CD4-positive, alpha-beta memory T cell (primary cell): ENCODE measurements at regions of chr1 and their contacts with region 1.

Region 1: DNA sequence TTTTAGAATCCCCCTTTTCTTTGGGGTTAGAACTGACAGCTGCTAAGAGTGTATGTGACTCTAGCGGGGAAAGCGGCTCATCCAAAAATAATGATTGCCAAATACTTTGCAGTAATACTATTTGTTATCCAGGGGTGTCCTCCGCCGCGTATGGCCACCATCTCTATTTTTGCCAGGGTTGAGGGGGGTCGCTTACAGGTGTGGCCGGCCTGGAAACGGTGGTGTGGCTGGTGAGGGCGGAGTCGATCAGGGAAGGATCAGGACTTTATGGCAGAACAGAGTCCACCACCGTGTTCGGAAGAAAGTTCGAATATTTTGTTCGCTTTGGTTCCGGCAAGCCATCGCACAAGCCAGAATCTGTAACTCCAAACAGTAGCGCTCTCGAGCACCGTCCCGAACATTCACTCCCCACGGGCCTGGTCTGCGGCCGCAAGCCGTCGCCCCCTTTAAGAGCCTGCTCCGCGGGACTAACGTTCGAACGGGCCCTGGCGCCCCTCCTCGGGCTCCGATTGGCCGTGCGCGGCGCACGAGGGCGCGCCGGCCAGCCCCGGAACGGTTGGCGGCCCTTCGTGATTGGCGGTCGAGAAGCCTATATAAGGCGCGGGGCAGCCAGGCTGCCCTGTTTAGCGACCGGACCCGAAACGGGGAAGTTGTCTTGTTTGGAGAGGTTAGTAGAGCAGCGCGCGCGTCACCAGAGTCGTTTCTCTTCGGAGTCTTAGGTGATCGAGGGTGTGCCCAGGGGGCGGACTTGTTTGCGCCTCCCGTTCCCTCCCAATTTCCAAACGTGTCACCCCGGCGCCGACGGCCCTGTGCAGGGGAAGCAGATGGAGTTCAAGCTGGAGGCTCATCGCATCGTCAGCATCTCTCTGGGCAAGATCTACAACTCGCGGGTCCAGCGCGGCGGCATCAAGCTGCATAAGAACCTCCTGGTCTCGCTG is at the start of gene IER5:
- DNase-seq: peak; percentile 93 to 95 (median 95)
- H3K4me3 ChIP-seq: peak within 1 kb of the TSS; percentile 68 to 69
- H3K4me3 Mint-ChIP-seq: peak within 1 kb of the TSS; percentile 98 to 100 (median 99)
- H3K27ac ChIP-seq: peak within 1 kb of the TSS; percentile 100
- H3K27ac Mint-ChIP-seq: peak within 1 kb of the TSS; percentile 96 to 99 (median 99)
- H3K4me1 ChIP-seq: peaks cover 40% of the 10 kb centered on the region
- H3K4me1 Mint-ChIP-seq: peaks cover 29 to 63% (median 40%) of the 10 kb centered on the region in 4 donors
- H3K27me3 ChIP-seq: no peaks in the 10 kb centered on the region
- H3K27me3 Mint-ChIP-seq: no peaks in the 10 kb centered on the region
- total RNA-seq, gene IER5: 28.0 to 29.3 TPM

Region 2: GRCh38 chr1:180502360-180503273 is 585.7 kb before region 1 on chr1 and contains the start of gene ACBD6:
- CTCF ChIA-PET with region 1: no interaction called
- POLR2A ChIA-PET with region 1: interaction called, 12 read pairs
- intact Hi-C with region 1: loop called (anchors 5 kb)
- DNase-seq: peak; percentile 86 to 91 (median 88)
- H3K4me3 ChIP-seq: peak within 1 kb of the TSS; percentile 89 to 95
- H3K4me3 Mint-ChIP-seq: peak within 1 kb of the TSS; percentile 96 to 99 (median 98)
- H3K27ac ChIP-seq: peak within 1 kb of the TSS; percentile 71
- H3K27ac Mint-ChIP-seq: peak within 1 kb of the TSS; percentile 92 to 99 (median 97)
- H3K4me1 ChIP-seq: peaks cover 42% of the 10 kb centered on the region
- H3K4me1 Mint-ChIP-seq: peaks cover 23 to 42% (median 31%) of the 10 kb centered on the region in 4 donors
- H3K27me3 ChIP-seq: no peaks in the 10 kb centered on the region
- H3K27me3 Mint-ChIP-seq: no peaks in the 10 kb centered on the region
- total RNA-seq, gene ACBD6: 55.1 to 64.2 TPM

Region 3: DNA sequence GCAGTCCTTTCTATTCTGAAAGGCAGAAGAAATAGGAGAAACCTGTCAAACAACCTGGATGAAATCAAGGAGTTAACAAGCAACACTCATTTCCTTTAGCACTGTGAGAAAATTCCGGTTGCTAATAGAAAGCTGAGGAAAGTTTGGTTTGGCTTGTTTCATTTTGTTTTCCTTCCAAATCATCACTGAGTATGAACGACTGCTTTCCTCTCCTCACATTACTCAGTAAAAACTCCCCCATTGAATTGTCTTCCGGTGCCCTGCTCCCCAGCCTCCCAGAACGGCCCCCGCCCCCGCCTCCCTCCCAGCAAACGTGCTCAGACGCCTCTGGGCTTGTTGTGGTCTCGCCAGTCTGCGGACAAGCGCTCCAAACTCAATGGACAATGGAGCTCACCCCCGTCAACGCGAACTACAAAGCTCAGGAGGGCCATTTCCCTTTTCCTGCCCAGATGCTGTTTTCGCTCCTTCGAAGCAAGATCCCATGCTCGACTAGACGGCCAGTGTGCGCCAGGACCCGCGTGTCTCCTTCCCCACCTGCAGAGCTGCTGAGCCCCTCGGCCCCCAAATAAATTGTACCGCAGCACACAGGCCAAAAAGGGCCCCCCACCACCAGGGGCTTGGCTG is 66.4 kb before region 1 on chr1:
- CTCF ChIA-PET with region 1: interaction called, 3 read pairs
- POLR2A ChIA-PET with region 1: interaction called, 35 read pairs
- intact Hi-C with region 1: loop called (anchors 2 kb)
- DNase-seq: peak; percentile 26 to 79 (median 43)
- H3K4me3 ChIP-seq: peak overlapping the region; percentile 73 to 90
- H3K4me3 Mint-ChIP-seq: peak overlapping the region; percentile 95 to 98 (median 96)
- H3K27ac ChIP-seq: peak overlapping the region; percentile 75
- H3K27ac Mint-ChIP-seq: peak overlapping the region; percentile 93 to 100 (median 99)
- H3K4me1 ChIP-seq: peaks cover 51% of the 10 kb centered on the region
- H3K4me1 Mint-ChIP-seq: peaks cover 32 to 66% (median 41%) of the 10 kb centered on the region in 4 donors
- H3K27me3 ChIP-seq: no peaks in the 10 kb centered on the region
- H3K27me3 Mint-ChIP-seq: peaks cover 0 to 8% of the 10 kb centered on the region in 2 donors

Region 4: DNA sequence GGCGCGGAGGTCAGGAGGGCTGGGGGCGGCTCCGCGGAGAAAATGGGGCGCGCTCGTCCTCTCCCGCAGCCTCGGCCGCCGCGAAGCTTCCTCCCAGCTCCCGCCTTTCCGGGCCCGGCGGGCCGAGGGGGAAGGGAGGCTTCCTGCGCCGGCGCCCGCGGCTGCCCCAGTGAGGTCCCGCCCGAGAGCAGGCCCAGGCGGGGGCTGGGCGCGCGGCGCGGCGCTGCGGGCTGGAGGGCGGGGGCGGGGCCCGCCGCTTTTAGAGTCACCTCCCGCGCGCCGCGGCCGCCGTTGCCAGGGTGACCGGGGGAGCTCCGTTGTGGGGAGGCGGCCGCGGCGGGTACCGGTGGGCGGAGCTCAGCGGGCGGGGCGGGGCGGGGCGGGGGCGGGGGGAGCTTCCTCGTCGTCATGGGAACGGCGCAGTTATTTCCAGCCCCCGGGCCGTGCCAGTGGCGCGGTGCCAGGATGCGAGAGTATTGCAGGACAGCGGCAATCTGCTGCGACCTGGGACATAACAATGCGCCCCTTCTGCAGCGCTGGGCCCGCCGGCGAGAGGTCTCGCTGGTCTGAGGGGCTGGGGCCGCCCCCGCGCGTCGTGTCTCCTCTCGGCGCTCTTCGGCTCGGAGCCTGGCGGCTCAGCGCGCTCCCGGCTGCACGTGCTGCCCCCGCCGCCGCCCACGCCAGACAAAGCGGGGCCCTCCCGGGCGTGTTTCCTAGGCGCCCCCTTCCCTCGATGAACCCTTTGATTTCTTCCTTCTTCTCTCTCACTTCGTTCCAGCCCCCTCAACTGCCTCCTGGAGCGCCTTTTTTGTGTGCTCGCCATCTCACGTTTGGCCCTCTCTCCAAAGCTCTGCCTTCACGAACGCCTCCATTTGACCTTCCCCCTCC is 17.0 kb after region 1 on chr1:
- CTCF ChIA-PET with region 1: interaction called, 75 read pairs
- POLR2A ChIA-PET with region 1: interaction called, 508 read pairs
- intact Hi-C with region 1: loop called (anchors 1 kb)
- DNase-seq: peak; percentile 90 to 94 (median 91)
- H3K4me3 ChIP-seq: peak overlapping the region in 1 of 2 donors; percentile 76
- H3K4me3 Mint-ChIP-seq: peak overlapping the region; percentile 87 to 97 (median 90)
- H3K27ac ChIP-seq: peak overlapping the region; percentile 79
- H3K27ac Mint-ChIP-seq: peak overlapping the region; percentile 92 to 98 (median 96)
- H3K4me1 ChIP-seq: peaks cover 56% of the 10 kb centered on the region
- H3K4me1 Mint-ChIP-seq: peaks cover 33 to 71% (median 50%) of the 10 kb centered on the region in 4 donors
- H3K27me3 ChIP-seq: no peaks in the 10 kb centered on the region
- H3K27me3 Mint-ChIP-seq: no peaks in the 10 kb centered on the region

Region 5: DNA sequence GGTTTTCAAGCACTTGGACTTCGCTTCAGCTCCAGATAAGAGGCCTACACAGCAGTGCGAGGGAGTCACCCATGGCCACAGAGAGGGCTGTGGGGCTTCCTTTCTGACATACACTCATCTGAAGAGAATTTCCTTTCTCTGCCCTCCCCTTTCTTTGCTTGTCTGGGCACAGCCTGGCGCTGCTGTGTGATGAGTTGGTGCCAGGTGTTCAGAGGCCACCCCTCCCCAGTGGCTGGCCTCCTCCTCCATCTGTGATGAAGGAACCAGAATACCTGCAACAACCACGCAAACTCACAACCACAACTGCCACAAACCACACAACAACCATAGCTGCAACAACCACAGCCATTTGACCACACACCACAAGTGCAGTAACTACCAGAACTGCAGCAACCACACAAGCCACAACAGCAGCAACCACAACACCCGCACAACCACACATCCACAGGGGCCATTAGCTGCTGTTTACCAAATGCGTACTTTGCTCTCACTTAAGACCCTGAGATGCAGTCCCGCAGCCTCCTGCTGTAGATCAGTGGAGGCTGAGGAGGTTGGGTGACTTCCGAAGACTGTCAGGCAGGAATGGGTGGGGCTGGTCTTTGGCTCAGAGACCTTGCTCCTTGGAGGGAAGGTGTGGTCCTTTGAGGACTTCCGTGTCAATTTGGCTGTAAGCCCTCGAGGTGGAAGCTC is 71.2 kb after region 1 on chr1:
- CTCF ChIA-PET with region 1: interaction called, 11 read pairs
- POLR2A ChIA-PET with region 1: interaction called, 73 read pairs
- intact Hi-C with region 1: no loop called
- DNase-seq: peak; percentile 72 to 84 (median 76)
- H3K4me3 ChIP-seq: peak overlapping the region in 1 of 2 donors; percentile 17
- H3K4me3 Mint-ChIP-seq: peak overlapping the region; percentile 65 to 83 (median 76)
- H3K27ac ChIP-seq: peak overlapping the region; percentile 16
- H3K27ac Mint-ChIP-seq: peak overlapping the region; percentile 91 to 98 (median 96)
- H3K4me1 ChIP-seq: peaks cover 40% of the 10 kb centered on the region
- H3K4me1 Mint-ChIP-seq: peaks cover 28 to 48% (median 39%) of the 10 kb centered on the region in 4 donors
- H3K27me3 ChIP-seq: no peaks in the 10 kb centered on the region
- H3K27me3 Mint-ChIP-seq: peaks cover 0 to 3% of the 10 kb centered on the region in 2 donors

Region 6: GRCh38 chr1:181452754-181453153 is 364.4 kb after region 1 on chr1:
- CTCF ChIA-PET with region 1: no interaction called
- POLR2A ChIA-PET with region 1: no interaction called
- intact Hi-C with region 1: no loop called
- DNase-seq: no peak
- H3K4me3 ChIP-seq: no peak overlapping the region
- H3K4me3 Mint-ChIP-seq: no peak overlapping the region
- H3K27ac ChIP-seq: no peak overlapping the region
- H3K27ac Mint-ChIP-seq: no peak overlapping the region
- H3K4me1 ChIP-seq: no peaks in the 10 kb centered on the region
- H3K4me1 Mint-ChIP-seq: no peaks in the 10 kb centered on the region
- H3K27me3 ChIP-seq: no peaks in the 10 kb centered on the region
- H3K27me3 Mint-ChIP-seq: peaks cover 2 to 10% of the 10 kb centered on the region in 2 donors